HepG2 (cell line): ENCODE measurements at regions of chr18 and their contacts with region 1.

Region 1: DNA sequence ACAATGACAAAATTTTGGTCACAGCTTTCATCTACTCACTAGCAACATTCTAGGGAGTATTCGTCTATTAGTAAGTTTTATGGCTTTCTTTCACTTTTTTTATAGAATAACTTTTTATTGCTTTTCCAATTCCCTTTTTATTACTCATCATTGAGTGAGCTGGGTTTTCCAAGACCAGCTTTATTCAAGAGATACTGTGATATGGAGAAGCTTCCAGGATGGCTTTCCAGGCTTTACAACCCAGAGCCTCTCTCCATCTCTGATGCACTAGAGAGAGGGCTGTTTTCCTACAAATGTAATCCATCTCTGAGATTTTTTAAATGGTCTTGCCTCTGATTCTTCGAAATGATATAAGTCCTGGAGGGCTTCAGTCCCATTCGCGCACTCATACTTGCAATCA is 118.3 kb downstream of the LDLRAD4 start:
- DNase-seq: no peak
- ATAC-seq: no peak
- H3K4me3 ChIP-seq: no peak overlapping the region
- H3K27ac ChIP-seq: peak overlapping the region; percentile 83
- H3K4me1 ChIP-seq: peaks cover 42% of the 10 kb centered on the region
- H3K27me3 ChIP-seq: no peaks in the 10 kb centered on the region
- CTCF ChIP-seq: no peak
- EP300 ChIP-seq: no peak
- POLR2A ChIP-seq: no peak
- RAD21 ChIP-seq: no peak

Region 2: GRCh38 chr18:13036622-13037320 is 300.1 kb before region 1 on chr18:
- CTCF ChIA-PET with region 1: no interaction called
- POLR2A ChIA-PET with region 1: no interaction called
- in situ Hi-C with region 1: no loop called
- intact Hi-C with region 1: no loop called
- DNase-seq: no peak
- ATAC-seq: no peak
- H3K4me3 ChIP-seq: no peak overlapping the region
- H3K27ac ChIP-seq: no peak overlapping the region
- H3K4me1 ChIP-seq: no peaks in the 10 kb centered on the region
- H3K27me3 ChIP-seq: no peaks in the 10 kb centered on the region
- CTCF ChIP-seq: no peak
- EP300 ChIP-seq: no peak
- POLR2A ChIP-seq: no peak
- RAD21 ChIP-seq: no peak

Region 3: GRCh38 chr18:13471971-13472628 is 135.3 kb after region 1 on chr18:
- CTCF ChIA-PET with region 1: no interaction called
- POLR2A ChIA-PET with region 1: interaction called, 4 read pairs
- in situ Hi-C with region 1: no loop called
- intact Hi-C with region 1: loop called (anchors 5 kb)
- DNase-seq: peak; percentile 86
- ATAC-seq: peak; percentile 89
- H3K4me3 ChIP-seq: peak overlapping the region; percentile 10 to 65 (median 39); a peak in 5 of 6 replicates
- H3K27ac ChIP-seq: peak overlapping the region; percentile 64
- H3K4me1 ChIP-seq: peaks cover 58% of the 10 kb centered on the region
- H3K27me3 ChIP-seq: no peaks in the 10 kb centered on the region
- CTCF ChIP-seq: no peak
- EP300 ChIP-seq: peak in 1 of 2 experiments; percentile 18; a peak in 1 of 4 replicates
- POLR2A ChIP-seq: no peak; a peak in 1 of 4 replicates
- RAD21 ChIP-seq: no peak

Region 4: DNA sequence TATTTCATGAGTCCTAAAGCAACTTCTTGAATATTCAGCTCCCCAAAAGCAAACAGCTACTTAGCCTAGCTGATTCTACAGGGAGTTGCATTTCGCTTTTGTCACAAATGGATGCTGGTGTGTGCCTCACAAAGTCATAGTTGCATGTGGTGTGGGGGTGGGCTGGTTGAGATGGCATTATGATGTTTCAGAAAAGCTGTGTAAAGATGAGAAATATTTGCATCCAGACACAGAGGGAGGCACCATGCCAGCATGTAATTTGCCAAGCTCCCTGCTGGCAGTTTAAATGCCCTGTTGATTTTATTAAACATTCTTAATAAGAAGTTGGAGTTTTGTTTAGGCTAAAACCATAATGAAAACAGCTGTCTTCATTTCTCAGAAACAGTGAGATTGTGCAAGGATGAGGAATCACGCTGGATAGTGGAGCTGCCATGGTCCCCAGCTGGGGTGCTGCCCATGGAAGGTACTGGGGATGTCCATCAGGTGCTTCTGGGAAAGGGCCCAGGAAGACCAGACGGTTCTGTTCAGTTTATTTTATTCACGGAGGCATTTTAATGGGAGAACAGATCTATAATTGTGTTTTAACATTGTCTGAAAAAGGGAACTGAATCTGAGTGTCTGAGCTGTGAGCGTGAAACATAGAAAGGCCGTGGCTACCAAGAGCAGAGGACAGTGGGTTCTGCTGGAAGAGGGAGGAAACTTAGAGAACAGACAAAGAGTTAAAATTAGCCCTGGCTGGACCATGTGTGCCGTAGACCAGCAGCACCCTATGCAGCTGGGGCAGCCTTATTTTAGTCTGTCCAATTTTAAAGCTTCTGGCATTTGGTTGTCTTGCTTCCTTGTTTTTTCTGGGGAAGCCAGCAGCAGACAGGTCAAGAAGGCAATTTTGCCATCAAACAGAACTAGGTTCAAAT is 212.4 kb after region 1 on chr18:
- CTCF ChIA-PET with region 1: no interaction called
- POLR2A ChIA-PET with region 1: no interaction called
- in situ Hi-C with region 1: no loop called
- intact Hi-C with region 1: loop called (anchors 10 kb)
- DNase-seq: no peak
- ATAC-seq: no peak
- H3K4me3 ChIP-seq: no peak overlapping the region
- H3K27ac ChIP-seq: no peak overlapping the region
- H3K4me1 ChIP-seq: peaks cover 31% of the 10 kb centered on the region
- H3K27me3 ChIP-seq: no peaks in the 10 kb centered on the region
- CTCF ChIP-seq: no peak
- EP300 ChIP-seq: no peak
- POLR2A ChIP-seq: no peak
- RAD21 ChIP-seq: no peak

Region 5: DNA sequence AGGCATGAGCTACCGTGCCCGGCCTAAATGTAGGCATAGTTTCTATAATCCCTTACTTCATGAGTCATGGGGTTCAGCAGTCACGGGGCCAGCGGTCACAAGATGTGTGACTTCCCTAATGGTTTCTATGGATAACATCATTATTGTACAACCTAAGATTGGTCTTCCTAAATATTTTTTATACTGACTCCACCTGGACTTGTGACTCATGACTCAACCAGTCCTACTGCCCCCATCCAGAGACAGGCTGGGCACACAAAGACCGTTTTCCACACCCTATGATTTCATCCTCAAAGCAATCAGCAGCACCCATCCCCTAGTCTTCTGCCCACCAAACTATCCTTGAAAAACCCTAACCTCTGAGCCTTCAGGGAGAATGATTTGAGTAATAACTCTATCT is 373.6 kb after region 1 on chr18:
- CTCF ChIA-PET with region 1: no interaction called
- POLR2A ChIA-PET with region 1: no interaction called
- in situ Hi-C with region 1: no loop called
- intact Hi-C with region 1: loop called (anchors 10 kb)
- DNase-seq: no peak
- ATAC-seq: no peak
- H3K4me3 ChIP-seq: no peak overlapping the region
- H3K27ac ChIP-seq: no peak overlapping the region
- H3K4me1 ChIP-seq: peaks cover 33% of the 10 kb centered on the region
- H3K27me3 ChIP-seq: no peaks in the 10 kb centered on the region; a peak in 1 of 5 replicates
- CTCF ChIP-seq: no peak
- EP300 ChIP-seq: no peak
- POLR2A ChIP-seq: no peak
- RAD21 ChIP-seq: no peak

Region 6: GRCh38 chr18:13831864-13832508 is 495.1 kb after region 1 on chr18:
- CTCF ChIA-PET with region 1: no interaction called
- POLR2A ChIA-PET with region 1: no interaction called
- in situ Hi-C with region 1: no loop called
- intact Hi-C with region 1: no loop called
- DNase-seq: peak; percentile 36
- ATAC-seq: peak; percentile 79
- H3K4me3 ChIP-seq: no peak overlapping the region
- H3K27ac ChIP-seq: no peak overlapping the region
- H3K4me1 ChIP-seq: peaks cover 10% of the 10 kb centered on the region
- H3K27me3 ChIP-seq: peaks cover 0 to 8% of the 10 kb centered on the region in 2 experiments; a peak in 2 of 5 replicates
- CTCF ChIP-seq: peak; percentile 46
- EP300 ChIP-seq: no peak
- POLR2A ChIP-seq: no peak
- RAD21 ChIP-seq: 0 out of 2 replicates have a peak, but pooled peaks have one; percentile 25